Sciatic nerve (tissue), 2 donors: ENCODE measurements at regions of chr2 and their contacts with region 1.

Region 1: DNA sequence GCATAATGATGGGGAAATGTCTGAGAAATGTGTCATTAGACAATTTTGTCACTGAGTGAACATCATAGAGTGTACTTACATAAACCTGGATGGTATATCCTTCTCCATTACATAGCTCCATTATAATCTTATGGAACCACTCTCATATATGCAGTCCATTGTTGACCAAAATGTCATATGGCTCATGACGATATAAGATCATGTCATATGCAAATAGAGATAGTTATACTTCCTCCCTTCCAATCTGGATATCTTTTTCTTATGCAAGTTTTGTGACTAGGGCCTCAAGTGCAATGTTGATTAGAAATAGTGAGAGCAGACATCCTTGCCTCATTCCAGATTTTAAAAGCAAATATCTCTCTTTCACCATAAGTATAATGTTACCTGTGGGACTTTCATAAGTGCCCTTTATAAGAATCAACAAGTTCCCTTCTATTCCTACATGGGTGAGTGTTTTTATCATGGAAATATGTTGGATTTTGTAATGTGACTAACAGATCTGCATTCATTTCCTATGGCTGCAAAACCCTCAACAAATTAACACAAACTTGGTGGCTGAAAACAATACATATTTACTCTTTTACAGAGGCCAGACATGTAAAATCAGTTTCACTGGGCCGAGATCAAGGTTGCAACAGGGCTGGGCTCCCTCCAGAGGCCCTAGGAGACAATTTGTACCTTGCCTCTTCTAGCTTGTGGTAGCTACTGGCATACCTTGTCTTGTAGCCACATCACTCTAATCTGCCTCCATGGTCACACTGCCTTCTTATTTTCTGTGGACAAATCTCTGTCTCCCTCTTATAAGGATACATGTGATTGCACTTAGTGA is 21.6 kb upstream of the SULT1C4 start:
- DNase-seq: no peak
- ATAC-seq: no peak

Region 2: GRCh38 chr2:106921451-106921850 is 1434.7 kb before region 1 on chr2:
- intact Hi-C with region 1: loop called (anchors 5 kb)
- DNase-seq: no peak
- ATAC-seq: no peak

Region 3: DNA sequence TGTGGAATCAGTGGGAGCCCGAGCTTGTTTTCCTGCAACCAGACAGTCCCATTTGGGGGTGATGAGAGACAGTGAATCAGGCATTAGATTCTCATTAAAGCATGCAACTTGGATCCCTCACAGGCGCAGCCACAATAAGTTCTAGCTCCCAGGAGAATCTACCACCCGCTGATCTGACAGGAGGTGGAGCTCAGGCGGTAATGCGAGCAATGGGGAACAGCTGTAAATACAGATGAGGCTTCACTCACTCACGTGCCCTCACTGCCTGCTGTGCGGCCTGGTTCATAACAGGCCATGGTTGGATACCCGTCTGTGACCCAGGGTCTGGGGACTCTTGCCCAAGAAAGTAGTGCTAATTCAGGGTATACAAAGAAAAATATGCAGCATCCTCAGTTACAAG is 674.2 kb before region 1 on chr2:
- intact Hi-C with region 1: no loop called
- DNase-seq: no peak
- ATAC-seq: no peak

Region 4: GRCh38 chr2:108330979-108331378 is 25.1 kb before region 1 on chr2:
- intact Hi-C with region 1: no loop called
- DNase-seq: no peak
- ATAC-seq: no peak

Region 5: DNA sequence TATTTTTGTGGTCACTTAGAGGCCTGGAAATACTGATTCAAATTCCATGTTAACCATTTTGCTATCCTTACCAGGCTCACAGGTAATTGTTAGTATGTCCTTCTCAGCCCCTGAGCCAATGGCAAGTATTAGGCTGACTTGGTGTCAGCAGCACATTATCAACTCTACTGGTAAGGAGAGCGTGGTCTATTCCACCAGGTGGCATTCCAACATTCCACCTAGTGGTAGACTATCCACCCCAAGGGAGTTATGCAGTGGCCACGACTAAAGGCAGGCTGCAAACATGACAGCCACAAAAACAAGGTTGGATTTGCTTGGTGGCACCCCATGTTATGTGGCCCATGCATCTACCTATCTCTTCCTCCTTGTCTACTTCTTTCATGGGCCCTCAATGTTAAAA is 61.1 kb after region 1 on chr2:
- intact Hi-C with region 1: no loop called
- DNase-seq: no peak
- ATAC-seq: no peak